ENCODE measurements at regions of chr5 and their contacts with region 1.

Region 1: GRCh38 chr5:68392617-68393016 is 177.1 kb downstream of the PIK3R1 start:
- DNase-seq: no peak
- ATAC-seq: no peak
- H3K4me3 ChIP-seq: no peak overlapping the region
- H3K27ac ChIP-seq: no peak overlapping the region
- H3K4me1 ChIP-seq: no peaks in the 10 kb centered on the region
- H3K27me3 ChIP-seq: no peaks in the 10 kb centered on the region
- CTCF ChIP-seq: no peak
- POLR2A ChIP-seq: no peak

Region 2: GRCh38 chr5:67617045-67617444 is 775.6 kb before region 1 on chr5:
- in situ Hi-C with region 1: no loop called
- intact Hi-C with region 1: loop called (anchors 5 kb)
- DNase-seq: no peak
- ATAC-seq: no peak
- H3K4me3 ChIP-seq: no peak overlapping the region
- H3K27ac ChIP-seq: no peak overlapping the region
- H3K4me1 ChIP-seq: peaks cover 20 to 22% of the 10 kb centered on the region in 2 donors
- H3K27me3 ChIP-seq: no peaks in the 10 kb centered on the region
- CTCF ChIP-seq: no peak
- POLR2A ChIP-seq: no peak